ENCODE measurements at regions of chr12 and their contacts with region 1.

Region 1: GRCh38 chr12:56189176-56189917 is at the start of gene SMARCC2:
- DNase-seq: peak; percentile 90
- ATAC-seq: peak; percentile 85
- H3K4me3 Mint-ChIP-seq: peak within 1 kb of the TSS; percentile 95
- H3K27ac Mint-ChIP-seq: peak within 1 kb of the TSS; percentile 97
- H3K4me1 Mint-ChIP-seq: peaks cover 46% of the 10 kb centered on the region
- H3K27me3 Mint-ChIP-seq: no peaks in the 10 kb centered on the region
- total RNA-seq, gene SMARCC2: 147 to 150 TPM

Region 2: GRCh38 chr12:55738123-55739024 is 451.0 kb before region 1 on chr12:
- CTCF ChIA-PET with region 1: interaction called, 15 read pairs
- DNase-seq: peak; percentile 93
- ATAC-seq: peak; percentile 75
- H3K4me3 Mint-ChIP-seq: peak overlapping the region; percentile 80
- H3K27ac Mint-ChIP-seq: peak overlapping the region; percentile 88
- H3K4me1 Mint-ChIP-seq: peaks cover 31% of the 10 kb centered on the region
- H3K27me3 Mint-ChIP-seq: peaks cover 8% of the 10 kb centered on the region

Region 3: GRCh38 chr12:56071648-56072047 is 117.7 kb before region 1 on chr12:
- CTCF ChIA-PET with region 1: no interaction called
- DNase-seq: no peak
- ATAC-seq: no peak
- H3K4me3 Mint-ChIP-seq: no peak overlapping the region
- H3K27ac Mint-ChIP-seq: no peak overlapping the region
- H3K4me1 Mint-ChIP-seq: peaks cover 3% of the 10 kb centered on the region
- H3K27me3 Mint-ChIP-seq: peaks cover 6% of the 10 kb centered on the region

Region 4: GRCh38 chr12:56104109-56104814 is 85.1 kb before region 1 on chr12 and contains the start of gene PA2G4:
- CTCF ChIA-PET with region 1: interaction called, 20 read pairs
- DNase-seq: peak; percentile 100
- ATAC-seq: peak; percentile 92
- H3K4me3 Mint-ChIP-seq: peak within 1 kb of the TSS; percentile 99
- H3K27ac Mint-ChIP-seq: peak within 1 kb of the TSS; percentile 98
- H3K4me1 Mint-ChIP-seq: peaks cover 44% of the 10 kb centered on the region
- H3K27me3 Mint-ChIP-seq: no peaks in the 10 kb centered on the region
- total RNA-seq, gene PA2G4: 293 to 364 TPM

Region 5: DNA sequence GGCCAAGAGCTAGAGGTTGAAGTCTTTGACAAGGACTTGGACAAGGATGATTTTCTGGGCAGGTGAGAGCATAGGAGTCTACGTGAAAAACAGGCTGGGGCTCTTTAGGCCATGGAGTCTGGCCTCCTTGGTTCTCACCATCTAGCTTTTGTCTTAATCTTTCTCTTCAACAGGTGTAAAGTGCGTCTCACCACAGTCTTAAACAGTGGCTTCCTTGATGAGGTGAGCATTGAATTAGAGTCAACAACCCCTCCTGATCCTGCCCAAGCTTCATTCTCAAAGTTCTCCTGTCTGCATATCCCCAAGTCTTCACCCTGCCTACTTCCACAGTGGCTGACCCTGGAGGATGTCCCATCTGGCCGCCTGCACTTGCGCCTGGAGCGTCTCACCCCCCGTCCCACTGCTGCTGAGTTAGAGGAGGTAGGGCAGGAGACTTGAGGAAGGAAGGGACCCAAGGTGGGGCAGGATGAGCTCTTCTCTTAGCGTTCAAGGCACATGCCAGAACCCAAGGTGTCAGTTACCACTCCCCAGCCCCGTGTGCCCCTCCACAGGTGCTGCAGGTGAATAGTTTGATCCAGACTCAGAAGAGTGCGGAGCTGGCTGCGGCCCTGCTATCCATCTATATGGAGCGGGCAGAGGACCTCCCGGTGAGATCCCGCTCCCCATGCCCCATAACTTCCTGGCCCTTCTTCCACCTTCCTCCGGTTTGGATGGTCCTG is 51.3 kb before region 1 on chr12:
- CTCF ChIA-PET with region 1: interaction called, 24 read pairs
- DNase-seq: no peak
- ATAC-seq: no peak
- H3K4me3 Mint-ChIP-seq: no peak overlapping the region
- H3K27ac Mint-ChIP-seq: peak overlapping the region; percentile 44
- H3K4me1 Mint-ChIP-seq: peaks cover 46% of the 10 kb centered on the region
- H3K27me3 Mint-ChIP-seq: no peaks in the 10 kb centered on the region

Region 6: DNA sequence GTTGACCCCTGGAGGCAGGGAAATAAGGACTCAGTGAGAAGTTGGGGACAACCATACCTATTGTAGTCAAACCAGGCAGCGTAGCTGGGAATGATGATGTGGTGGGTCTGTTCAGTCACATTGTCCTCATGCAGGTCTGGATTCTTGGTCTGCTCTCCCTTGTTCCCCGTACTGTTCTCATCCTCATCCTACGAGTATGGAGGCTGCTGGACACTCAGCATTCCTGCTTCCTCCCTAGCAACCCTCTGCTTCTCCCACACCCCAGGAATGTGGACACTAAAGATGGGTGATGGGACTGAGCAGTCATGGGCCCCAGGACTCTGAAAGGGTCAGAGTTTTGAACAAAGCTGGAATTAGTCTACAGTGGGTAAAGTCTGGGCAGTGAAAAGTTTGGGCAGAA is 11.0 kb before region 1 on chr12:
- CTCF ChIA-PET with region 1: interaction called, 11 read pairs
- DNase-seq: no peak
- ATAC-seq: no peak
- H3K4me3 Mint-ChIP-seq: no peak overlapping the region
- H3K27ac Mint-ChIP-seq: no peak overlapping the region
- H3K4me1 Mint-ChIP-seq: no peaks in the 10 kb centered on the region
- H3K27me3 Mint-ChIP-seq: no peaks in the 10 kb centered on the region

Region 7: DNA sequence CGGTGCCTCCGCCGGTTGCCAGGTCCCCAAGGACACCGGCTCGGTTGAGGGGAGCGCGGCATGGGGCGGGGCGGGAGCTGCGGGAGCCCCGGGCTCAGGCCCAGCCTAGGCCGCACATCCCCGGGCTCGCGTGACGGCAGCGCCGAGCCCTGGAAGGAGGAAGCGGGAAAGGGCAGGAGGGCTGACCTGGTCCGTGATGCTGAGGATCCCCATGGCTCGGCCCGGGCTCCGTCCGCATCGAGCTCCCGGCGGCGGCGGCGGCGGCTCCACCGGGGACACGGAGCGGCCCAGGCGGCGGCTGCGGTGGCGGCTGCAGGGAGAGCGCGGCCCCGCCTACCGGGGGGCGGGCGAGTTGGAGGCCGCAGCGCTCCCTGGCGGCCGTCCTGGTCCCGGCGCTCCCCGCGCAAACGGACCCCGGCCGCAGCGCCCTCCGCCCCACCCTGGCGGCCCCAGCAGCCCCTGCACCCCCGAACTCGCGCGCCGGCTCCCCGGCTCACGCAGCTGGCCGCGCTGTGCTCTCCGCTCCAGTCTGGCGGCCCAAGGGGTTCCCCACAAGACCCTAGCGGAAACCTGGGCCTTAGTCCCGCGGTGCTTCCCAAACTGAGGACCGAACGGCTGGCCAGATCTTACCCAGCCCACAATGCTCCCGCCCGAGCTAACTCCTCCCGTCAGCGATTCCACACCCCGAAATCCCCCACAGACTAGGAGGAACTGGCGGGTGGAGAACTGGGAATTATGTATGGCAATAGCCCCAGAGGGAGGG is 68.9 kb after region 1 on chr12 and contains the start of gene ANKRD52:
- CTCF ChIA-PET with region 1: interaction called, 48 read pairs
- DNase-seq: peak; percentile 81
- ATAC-seq: peak; percentile 95
- H3K4me3 Mint-ChIP-seq: peak within 1 kb of the TSS; percentile 90
- H3K27ac Mint-ChIP-seq: peak within 1 kb of the TSS; percentile 88
- H3K4me1 Mint-ChIP-seq: peaks cover 23% of the 10 kb centered on the region
- H3K27me3 Mint-ChIP-seq: peaks cover 3% of the 10 kb centered on the region
- total RNA-seq, gene ANKRD52: 66.9 to 68.3 TPM

Region 8: GRCh38 chr12:56461235-56462159 is 272.1 kb after region 1 on chr12:
- CTCF ChIA-PET with region 1: interaction called, 22 read pairs
- DNase-seq: no peak
- ATAC-seq: no peak
- H3K4me3 Mint-ChIP-seq: no peak overlapping the region
- H3K27ac Mint-ChIP-seq: no peak overlapping the region
- H3K4me1 Mint-ChIP-seq: peaks cover 5% of the 10 kb centered on the region
- H3K27me3 Mint-ChIP-seq: no peaks in the 10 kb centered on the region